ENCODE measurements at regions of chr19 and their contacts with region 1.

Region 1: GRCh38 chr19:7349961-7350711 is 1.4 kb downstream of the ARHGEF18 start:
- DNase-seq: no peak
- H3K4me3 ChIP-seq: no peak overlapping the region
- H3K27ac ChIP-seq: no peak overlapping the region
- H3K4me1 ChIP-seq: no peaks in the 10 kb centered on the region; the same call in 1 of the 2 replicates
- H3K27me3 ChIP-seq: no peaks in the 10 kb centered on the region
- CTCF ChIP-seq: no peak

Region 2: GRCh38 chr19:6828698-6829562 is 521.2 kb before region 1 on chr19:
- CTCF ChIA-PET with region 1: no interaction called
- POLR2A ChIA-PET with region 1: no interaction called
- intact Hi-C with region 1: no loop called
- DNase-seq: peak; percentile 83 to 88
- H3K4me3 ChIP-seq: peak overlapping the region; percentile 73
- H3K27ac ChIP-seq: peak overlapping the region; percentile 82
- H3K4me1 ChIP-seq: peaks cover 8% of the 10 kb centered on the region
- H3K27me3 ChIP-seq: no peaks in the 10 kb centered on the region
- CTCF ChIP-seq: no peak

Region 3: GRCh38 chr19:7197760-7198696 is 152.1 kb before region 1 on chr19:
- CTCF ChIA-PET with region 1: no interaction called
- POLR2A ChIA-PET with region 1: interaction called, 10 read pairs
- intact Hi-C with region 1: no loop called
- DNase-seq: peak; percentile 62 to 86
- H3K4me3 ChIP-seq: peak overlapping the region; percentile 69
- H3K27ac ChIP-seq: peak overlapping the region; percentile 26; the same call in 1 of the 2 replicates
- H3K4me1 ChIP-seq: 0 out of 2 replicates have a peak, but pooled peaks cover 3% of the 10 kb centered on the region
- H3K27me3 ChIP-seq: no peaks in the 10 kb centered on the region
- CTCF ChIP-seq: no peak

Region 4: DNA sequence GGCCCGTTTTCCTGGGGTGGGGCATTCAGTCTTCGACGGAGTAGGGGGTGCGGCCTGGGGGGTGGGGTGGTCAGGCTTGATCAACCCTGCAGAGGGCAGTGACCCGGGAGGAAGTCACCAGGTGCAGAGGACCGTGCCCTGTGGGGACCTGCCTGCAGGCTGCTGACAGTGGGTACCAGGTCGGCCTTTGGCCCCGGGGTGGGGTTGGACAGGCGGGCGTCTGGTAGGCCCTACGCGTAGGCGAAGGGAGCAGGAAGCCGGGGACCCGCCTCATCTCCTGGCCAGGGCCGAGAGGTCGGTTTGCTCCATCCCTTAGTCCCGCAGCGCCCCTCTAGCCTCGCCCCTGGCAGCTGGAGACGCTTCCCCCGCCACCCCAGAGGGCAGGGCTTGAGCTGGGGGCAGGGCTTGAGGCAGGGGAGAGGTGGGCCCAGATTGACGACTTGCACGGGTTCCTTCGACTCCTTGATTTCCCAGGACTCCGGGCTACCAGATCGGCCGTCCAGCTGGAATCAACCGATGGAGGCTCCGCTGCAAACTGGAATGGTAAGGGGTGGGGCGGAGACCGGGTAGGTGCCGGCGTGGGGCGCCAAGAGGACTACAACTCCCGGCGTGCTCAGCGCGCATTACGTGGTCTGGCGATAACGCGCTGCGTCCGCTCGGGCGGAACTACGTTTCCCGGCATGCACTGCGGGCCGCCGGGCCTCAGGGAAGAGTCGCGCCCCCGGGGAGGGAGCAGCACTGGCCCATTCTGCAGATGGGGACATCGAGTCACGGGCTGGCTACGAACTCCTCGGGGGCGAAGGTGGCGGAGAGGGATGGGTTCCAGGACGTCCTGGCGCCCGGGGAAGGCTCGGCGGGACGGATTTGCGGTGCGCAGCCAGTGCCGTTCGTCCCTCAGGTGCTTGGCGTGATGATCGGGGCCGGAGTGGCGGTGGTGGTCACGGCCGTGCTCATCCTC is 185.2 kb after region 1 on chr19 and contains the start of gene PNPLA6:
- CTCF ChIA-PET with region 1: no interaction called
- POLR2A ChIA-PET with region 1: no interaction called
- intact Hi-C with region 1: loop called (anchors 10 kb)
- DNase-seq: peak; percentile 87 to 92
- H3K4me3 ChIP-seq: peak within 1 kb of the TSS; percentile 83
- H3K27ac ChIP-seq: peak within 1 kb of the TSS; percentile 76; the same call in 1 of the 2 replicates
- H3K4me1 ChIP-seq: peaks cover 9% of the 10 kb centered on the region
- H3K27me3 ChIP-seq: no peaks in the 10 kb centered on the region
- CTCF ChIP-seq: no peak
- total RNA-seq, gene PNPLA6: 121 and 139 TPM in 2 replicates

Region 5: GRCh38 chr19:7674010-7675005 is 324.2 kb after region 1 on chr19:
- CTCF ChIA-PET with region 1: no interaction called
- POLR2A ChIA-PET with region 1: no interaction called
- intact Hi-C with region 1: loop called (anchors 10 kb)
- DNase-seq: peak; percentile 33 to 66
- H3K4me3 ChIP-seq: no peak overlapping the region; the same call in 1 of the 2 replicates
- H3K27ac ChIP-seq: no peak overlapping the region
- H3K4me1 ChIP-seq: peaks cover 11% of the 10 kb centered on the region; the same call in 1 of the 2 replicates
- H3K27me3 ChIP-seq: peaks cover 73% of the 10 kb centered on the region
- CTCF ChIP-seq: no peak

Measured in PC-9 (cell line).